ENCODE measurements at regions of chr13 and their contacts with region 1.

Region 1: DNA sequence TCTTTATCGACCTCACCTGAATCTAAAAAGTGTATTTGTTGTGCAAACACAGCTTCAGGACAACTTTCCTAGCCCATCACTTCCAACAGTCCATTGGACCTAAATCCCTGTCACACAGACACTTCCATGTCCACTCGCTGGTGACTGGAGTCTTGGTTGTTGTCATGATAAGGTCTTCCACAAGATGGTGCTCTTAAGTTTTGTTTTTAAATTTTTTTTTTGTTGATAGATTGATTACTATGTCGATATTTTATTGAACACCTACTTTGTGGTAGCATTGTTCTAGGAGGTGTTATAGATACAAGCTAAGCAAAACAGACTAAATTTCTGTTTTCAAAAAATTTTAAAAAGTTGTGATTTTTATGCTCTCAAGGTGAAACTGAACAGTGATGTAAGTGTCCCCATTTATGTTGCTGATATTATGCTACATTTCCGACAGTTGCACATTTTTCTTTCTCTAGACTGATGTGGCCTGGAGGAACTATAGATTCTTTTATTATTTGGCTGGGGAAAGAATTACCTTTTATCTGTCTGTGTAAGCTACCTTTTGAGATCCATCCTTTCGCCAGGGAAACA is 8.1 kb upstream of the ERICH6B start:
- H3K4me3 ChIP-seq: no peak overlapping the region
- H3K27ac ChIP-seq: no peak overlapping the region
- H3K4me1 ChIP-seq: no peaks in the 10 kb centered on the region
- CTCF ChIP-seq: no peak

Region 2: GRCh38 chr13:45683701-45684100 is 60.1 kb after region 1 on chr13:
- CTCF ChIA-PET with region 1: interaction called, 13 read pairs
- POLR2A ChIA-PET with region 1: no interaction called
- H3K4me3 ChIP-seq: no peak overlapping the region
- H3K27ac ChIP-seq: no peak overlapping the region
- H3K4me1 ChIP-seq: 0 out of 2 replicates have a peak, but pooled peaks cover 3% of the 10 kb centered on the region
- CTCF ChIP-seq: no peak

Region 3: GRCh38 chr13:45718063-45718462 is 94.5 kb after region 1 on chr13:
- CTCF ChIA-PET with region 1: interaction called, 19 read pairs
- POLR2A ChIA-PET with region 1: no interaction called
- H3K4me3 ChIP-seq: no peak overlapping the region
- H3K27ac ChIP-seq: no peak overlapping the region
- H3K4me1 ChIP-seq: no peaks in the 10 kb centered on the region
- CTCF ChIP-seq: no peak

Region 4: GRCh38 chr13:45765464-45765863 is 141.9 kb after region 1 on chr13:
- CTCF ChIA-PET with region 1: no interaction called
- POLR2A ChIA-PET with region 1: no interaction called
- H3K4me3 ChIP-seq: no peak overlapping the region
- H3K27ac ChIP-seq: no peak overlapping the region
- H3K4me1 ChIP-seq: no peaks in the 10 kb centered on the region
- CTCF ChIP-seq: no peak

Measured in HEK293 (cell line).